Activated CD8-positive, alpha-beta T cell treated with anti-CD3 and anti-CD28 coated beads for 36 hours (primary cell): ENCODE measurements at regions of chr3 and their contacts with region 1.

Region 1: DNA sequence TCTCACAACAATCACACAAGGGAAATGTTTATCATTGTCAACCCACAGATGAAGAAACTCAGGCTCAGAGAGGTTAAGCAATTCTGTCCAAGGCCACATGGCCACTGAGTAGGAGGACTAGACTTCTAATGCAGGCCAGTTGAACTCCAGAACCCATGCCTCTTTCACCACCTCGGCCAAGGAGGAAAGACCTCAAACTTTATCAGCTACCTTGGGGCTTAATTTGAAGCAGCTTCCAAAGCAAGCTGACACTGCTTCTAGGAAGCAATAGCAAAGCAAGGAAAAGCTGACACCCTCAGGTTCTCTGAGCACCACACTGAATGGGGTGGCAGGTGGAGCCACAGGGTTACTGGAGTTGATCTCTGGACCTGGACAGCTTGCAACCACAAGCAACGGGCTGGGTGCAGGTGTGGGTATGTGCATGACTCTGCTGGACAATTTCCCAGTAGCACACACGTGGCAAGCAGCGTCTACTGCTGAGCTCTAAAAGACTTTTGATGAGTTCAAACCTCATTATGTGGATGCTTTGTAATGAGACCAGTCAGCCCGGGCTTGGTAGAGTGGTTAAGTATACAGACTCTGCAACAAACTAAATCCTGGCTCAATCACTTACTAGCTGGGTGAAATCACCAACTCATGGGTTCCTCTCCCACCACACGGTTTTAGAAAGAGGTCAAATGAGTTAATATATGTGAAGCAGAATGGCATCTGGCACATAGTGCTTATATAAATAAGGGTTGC is 23.1 kb downstream of the CCNL1 start:
- DNase-seq: no peak
- ATAC-seq: no peak
- H3K4me3 Mint-ChIP-seq: no peak overlapping the region
- H3K27ac Mint-ChIP-seq: peak overlapping the region; percentile 31
- H3K4me1 Mint-ChIP-seq: peaks cover 42% of the 10 kb centered on the region
- H3K27me3 Mint-ChIP-seq: no peaks in the 10 kb centered on the region
- CTCF ChIP-seq: no peak

Region 2: DNA sequence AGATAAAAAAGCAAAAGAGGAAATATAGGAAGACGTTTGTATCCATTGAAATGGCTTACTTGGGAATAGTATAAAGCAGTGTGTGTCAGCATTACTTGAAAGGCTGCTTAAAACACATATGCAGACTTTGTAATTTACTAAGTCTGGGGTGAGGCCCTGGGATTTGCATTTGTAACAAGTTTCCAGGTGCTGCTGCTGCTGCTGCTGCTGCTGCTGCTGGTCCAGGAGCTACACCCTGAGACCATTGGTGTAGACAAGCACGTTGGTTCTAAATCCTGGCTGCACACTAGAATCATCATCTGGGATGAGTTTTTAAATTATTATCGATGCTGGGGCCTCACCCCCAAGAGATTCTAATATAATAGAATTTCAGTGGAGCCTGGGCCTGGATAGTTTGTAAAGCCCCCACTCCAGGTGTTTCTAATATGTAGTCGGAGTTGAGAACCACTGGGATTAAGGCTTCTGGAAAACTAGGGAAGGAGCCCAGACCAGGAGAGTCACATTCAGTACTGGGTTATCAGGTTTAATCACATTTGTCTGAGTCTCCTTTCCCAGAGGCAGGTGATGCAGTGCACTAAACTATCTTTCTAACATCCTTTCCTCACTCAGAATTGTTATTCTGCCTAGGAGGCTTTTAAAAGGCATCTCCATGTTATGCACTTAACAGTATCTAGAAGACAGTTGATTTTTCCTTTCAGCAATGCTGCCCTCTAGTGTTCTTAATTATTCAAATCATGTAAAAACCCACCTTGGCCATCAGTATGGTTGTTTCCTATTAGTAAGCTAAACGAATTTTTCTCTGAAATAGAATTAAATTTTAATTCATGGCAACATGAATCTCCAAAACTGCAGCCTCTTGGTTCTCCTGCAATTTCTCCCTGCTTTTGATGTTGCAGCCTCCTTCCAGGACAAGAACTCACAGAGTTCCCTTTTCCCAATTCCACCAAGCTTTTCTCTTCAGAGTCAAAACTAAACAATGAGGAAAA is 627.3 kb before region 1 on chr3:
- CTCF ChIA-PET with region 1: interaction called, 10 read pairs
- POLR2A ChIA-PET with region 1: no interaction called
- intact Hi-C with region 1: no loop called
- DNase-seq: no peak
- ATAC-seq: peak; percentile 77
- H3K4me3 Mint-ChIP-seq: no peak overlapping the region
- H3K27ac Mint-ChIP-seq: no peak overlapping the region
- H3K4me1 Mint-ChIP-seq: peaks cover 2% of the 10 kb centered on the region
- H3K27me3 Mint-ChIP-seq: peaks cover 6% of the 10 kb centered on the region
- CTCF ChIP-seq: peak; percentile 45

Region 3: DNA sequence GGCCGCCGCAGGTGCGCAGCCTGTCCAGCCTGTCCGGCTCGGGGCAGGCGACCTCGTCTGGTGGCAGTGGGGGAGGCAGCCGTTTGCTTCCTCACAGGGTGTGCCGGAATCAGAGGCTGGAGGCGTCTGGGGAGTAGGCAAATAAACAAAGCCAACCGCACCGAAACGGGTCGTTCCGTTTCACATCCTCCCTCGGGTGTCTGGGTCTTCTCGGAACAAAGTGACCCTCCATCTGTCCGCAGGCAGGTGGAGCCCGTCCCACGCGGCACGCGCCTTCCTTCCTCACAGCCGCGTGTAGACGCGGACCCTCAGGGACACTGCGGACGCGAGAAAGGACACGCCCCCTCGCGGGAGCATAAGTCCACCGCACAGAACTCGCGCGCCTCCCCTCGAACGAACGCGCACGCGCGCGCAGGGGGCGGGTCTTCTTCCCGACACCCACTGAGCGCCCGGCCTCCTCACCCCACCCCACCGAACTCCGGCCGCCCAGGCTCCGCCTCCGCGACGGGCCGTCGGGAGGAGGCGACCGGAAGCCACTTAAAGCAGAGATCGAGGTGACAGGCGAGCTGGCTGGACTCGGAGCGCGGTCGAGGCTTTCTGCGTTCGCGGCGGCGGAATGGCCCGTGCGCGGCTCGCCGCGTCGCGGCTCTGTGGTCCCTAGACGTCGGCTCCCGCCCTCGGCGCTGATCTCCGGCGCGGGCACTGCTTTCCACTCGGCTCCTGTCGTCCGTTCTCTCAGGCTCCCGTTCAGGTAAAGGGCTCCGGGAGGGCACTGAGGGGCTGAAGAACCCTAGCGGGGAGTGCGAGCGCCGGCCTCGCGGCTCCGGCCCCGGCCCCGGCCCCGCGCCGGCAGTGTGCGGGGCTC is 462.5 kb before region 1 on chr3 and contains the start of gene TIPARP:
- CTCF ChIA-PET with region 1: interaction called, 19 read pairs
- POLR2A ChIA-PET with region 1: no interaction called
- intact Hi-C with region 1: loop called (anchors 5 kb)
- DNase-seq: peak; percentile 98
- ATAC-seq: peak; percentile 87
- H3K4me3 Mint-ChIP-seq: peak within 1 kb of the TSS; percentile 93
- H3K27ac Mint-ChIP-seq: peak within 1 kb of the TSS; percentile 89
- H3K4me1 Mint-ChIP-seq: peaks cover 30% of the 10 kb centered on the region
- H3K27me3 Mint-ChIP-seq: peaks cover 2% of the 10 kb centered on the region
- CTCF ChIP-seq: no peak
- total RNA-seq, gene TIPARP: 28.0 to 30.0 TPM

Region 4: GRCh38 chr3:157081681-157082210 is 55.1 kb before region 1 on chr3:
- CTCF ChIA-PET with region 1: interaction called, 84 read pairs
- POLR2A ChIA-PET with region 1: interaction called, 3 read pairs
- intact Hi-C with region 1: no loop called
- DNase-seq: peak; percentile 92
- ATAC-seq: peak; percentile 94
- H3K4me3 Mint-ChIP-seq: no peak overlapping the region
- H3K27ac Mint-ChIP-seq: peak overlapping the region; percentile 43
- H3K4me1 Mint-ChIP-seq: peaks cover 37% of the 10 kb centered on the region
- H3K27me3 Mint-ChIP-seq: no peaks in the 10 kb centered on the region
- CTCF ChIP-seq: peak; percentile 97

Region 5: GRCh38 chr3:157113832-157114505 is 22.8 kb before region 1 on chr3:
- CTCF ChIA-PET with region 1: interaction called, 53 read pairs
- POLR2A ChIA-PET with region 1: no interaction called
- intact Hi-C with region 1: no loop called
- DNase-seq: peak; percentile 30
- ATAC-seq: peak; percentile 86
- H3K4me3 Mint-ChIP-seq: no peak overlapping the region
- H3K27ac Mint-ChIP-seq: no peak overlapping the region
- H3K4me1 Mint-ChIP-seq: peaks cover 9% of the 10 kb centered on the region
- H3K27me3 Mint-ChIP-seq: no peaks in the 10 kb centered on the region
- CTCF ChIP-seq: peak; percentile 14

Region 6: GRCh38 chr3:157159762-157160657 is 23.2 kb after region 1 on chr3 and contains the start of gene CCNL1:
- CTCF ChIA-PET with region 1: interaction called, 25 read pairs
- POLR2A ChIA-PET with region 1: interaction called, 15 read pairs
- intact Hi-C with region 1: no loop called
- DNase-seq: peak; percentile 96
- ATAC-seq: peak; percentile 79
- H3K4me3 Mint-ChIP-seq: peak within 1 kb of the TSS; percentile 97
- H3K27ac Mint-ChIP-seq: peak within 1 kb of the TSS; percentile 99
- H3K4me1 Mint-ChIP-seq: peaks cover 45% of the 10 kb centered on the region
- H3K27me3 Mint-ChIP-seq: no peaks in the 10 kb centered on the region
- CTCF ChIP-seq: no peak
- total RNA-seq, gene CCNL1: 180 to 191 TPM